ENCODE measurements at regions of chr14 and their contacts with region 1.

Region 1: GRCh38 chr14:57390028-57390805 is at the start of gene NAA30:
- DNase-seq: peak; percentile 86

Region 2: GRCh38 chr14:57364659-57365450 is 25.4 kb before region 1 on chr14:
- CTCF ChIA-PET with region 1: no interaction called
- POLR2A ChIA-PET with region 1: interaction called, 10 read pairs
- DNase-seq: no peak

Region 3: GRCh38 chr14:57401501-57401900 is 11.3 kb after region 1 on chr14:
- CTCF ChIA-PET with region 1: no interaction called
- POLR2A ChIA-PET with region 1: interaction called, 14 read pairs
- DNase-seq: no peak